CD8-positive, alpha-beta T cell (primary cell): ENCODE measurements at regions of chr16 and their contacts with region 1.

Region 1: DNA sequence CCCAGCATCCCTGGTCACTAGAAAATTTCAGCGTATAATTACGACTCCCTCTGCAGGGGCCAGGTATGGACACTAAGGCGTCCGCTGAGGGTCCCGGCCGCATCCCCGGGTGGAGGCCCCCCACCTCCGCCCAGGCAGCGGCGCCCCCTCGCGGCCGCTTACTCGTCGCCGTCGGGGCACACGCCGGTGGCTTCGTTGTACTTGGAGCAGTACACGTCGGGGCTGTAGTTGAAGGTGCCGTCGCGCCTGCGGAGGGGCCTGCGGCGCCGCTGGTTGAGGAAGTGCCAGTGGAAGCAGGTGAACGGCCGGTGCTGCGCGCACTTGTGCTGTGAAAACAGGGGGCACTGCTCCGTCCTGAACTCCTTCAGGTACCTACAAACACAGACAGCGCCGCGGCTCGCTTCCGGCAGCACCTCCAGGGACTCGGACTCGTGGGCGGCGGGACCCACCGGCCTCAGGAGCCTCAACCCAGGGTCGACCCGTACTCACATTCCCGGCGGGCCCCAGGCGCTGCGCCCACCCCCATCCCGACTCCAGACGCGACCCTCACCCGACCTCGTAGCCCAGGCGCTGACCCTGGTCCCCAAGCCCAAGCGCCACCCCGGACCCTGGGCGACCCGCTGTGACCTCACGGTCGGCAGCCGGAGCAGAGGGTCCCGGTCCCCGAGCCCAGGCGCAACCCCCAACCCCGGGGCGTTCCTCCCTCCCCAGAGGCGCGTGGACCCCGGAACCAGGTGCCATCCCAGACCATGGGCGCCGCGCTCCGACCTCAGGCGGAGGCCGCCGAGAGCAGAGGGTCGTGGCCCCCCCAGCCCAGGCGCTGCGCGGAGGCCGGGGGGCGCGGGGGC is 596 bp downstream of the UNKL start:
- DNase-seq: peak; percentile 44 to 82 (median 69)
- ATAC-seq: peak; percentile 55
- H3K4me3 ChIP-seq: peak overlapping the region; percentile 64 to 85
- H3K4me3 Mint-ChIP-seq: peak overlapping the region; percentile 85
- H3K27ac ChIP-seq: peak overlapping the region; percentile 69 to 73
- H3K27ac Mint-ChIP-seq: peak overlapping the region; percentile 89
- H3K4me1 ChIP-seq: peaks cover 17% of the 10 kb centered on the region
- H3K4me1 Mint-ChIP-seq: peaks cover 37% of the 10 kb centered on the region
- H3K27me3 ChIP-seq: no peaks in the 10 kb centered on the region
- H3K27me3 Mint-ChIP-seq: no peaks in the 10 kb centered on the region
- CTCF ChIP-seq: peak; percentile 62

Region 2: GRCh38 chr16:1152651-1153259 is 261.2 kb before region 1 on chr16 and contains the start of gene CACNA1H:
- CTCF ChIA-PET with region 1: no interaction called
- POLR2A ChIA-PET with region 1: no interaction called
- intact Hi-C with region 1: loop called in 1 of 2 experiments (anchors 10 kb)
- DNase-seq: peak; percentile 27 to 74 (median 67)
- ATAC-seq: peak; percentile 77
- H3K4me3 ChIP-seq: peak within 1 kb of the TSS; percentile 29 to 37
- H3K4me3 Mint-ChIP-seq: peak within 1 kb of the TSS; percentile 72
- H3K27ac ChIP-seq: no peak within 1 kb of the TSS
- H3K27ac Mint-ChIP-seq: no peak within 1 kb of the TSS
- H3K4me1 ChIP-seq: peaks cover 11% of the 10 kb centered on the region
- H3K4me1 Mint-ChIP-seq: peaks cover 2% of the 10 kb centered on the region
- H3K27me3 ChIP-seq: peaks cover 12 to 22% of the 10 kb centered on the region in 2 experiments
- H3K27me3 Mint-ChIP-seq: peaks cover 10% of the 10 kb centered on the region
- CTCF ChIP-seq: peak; percentile 44
- total RNA-seq, gene CACNA1H: 1.5 to 1.9 TPM

Region 3: GRCh38 chr16:1308977-1309885 is 104.7 kb before region 1 on chr16 and contains the start of gene UBE2I:
- CTCF ChIA-PET with region 1: no interaction called
- POLR2A ChIA-PET with region 1: no interaction called
- intact Hi-C with region 1: no loop called
- DNase-seq: peak; percentile 96 to 99 (median 98)
- ATAC-seq: peak; percentile 73
- H3K4me3 ChIP-seq: peak within 1 kb of the TSS; percentile 82 to 95
- H3K4me3 Mint-ChIP-seq: peak within 1 kb of the TSS; percentile 92
- H3K27ac ChIP-seq: peak within 1 kb of the TSS; percentile 100
- H3K27ac Mint-ChIP-seq: peak within 1 kb of the TSS; percentile 100
- H3K4me1 ChIP-seq: peaks cover 50% of the 10 kb centered on the region
- H3K4me1 Mint-ChIP-seq: peaks cover 41% of the 10 kb centered on the region
- H3K27me3 ChIP-seq: no peaks in the 10 kb centered on the region
- H3K27me3 Mint-ChIP-seq: no peaks in the 10 kb centered on the region
- CTCF ChIP-seq: no peak
- total RNA-seq, gene UBE2I: 285 to 294 TPM

Region 4: DNA sequence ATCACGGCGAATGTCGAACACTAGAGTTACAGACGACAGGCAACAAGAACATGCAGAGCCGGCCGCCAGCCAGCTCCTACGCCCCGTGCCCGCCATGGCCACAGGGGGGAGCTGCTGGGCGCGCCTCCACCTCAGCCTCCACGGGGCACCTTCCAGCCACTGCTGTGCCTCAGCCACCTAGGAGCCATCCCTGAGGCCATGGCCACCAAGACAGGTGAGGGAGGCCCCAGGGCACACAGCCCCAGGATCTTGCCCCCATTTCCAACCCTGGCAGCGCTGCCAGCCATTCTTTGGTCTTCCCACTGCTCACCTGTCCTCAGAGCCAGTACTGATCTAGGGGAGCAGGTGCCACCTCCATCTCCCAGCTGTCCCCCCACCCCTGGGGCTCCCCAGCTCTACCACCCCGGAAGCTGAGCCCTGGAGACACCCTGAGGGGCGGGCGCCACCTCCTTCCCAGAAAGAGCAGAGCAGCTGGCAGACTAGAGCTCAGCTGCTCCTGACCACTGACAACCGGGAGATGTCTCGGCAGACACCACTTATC is 50.3 kb before region 1 on chr16:
- CTCF ChIA-PET with region 1: interaction called, 4 read pairs
- POLR2A ChIA-PET with region 1: interaction called, 3 read pairs
- intact Hi-C with region 1: loop called in 1 of 2 experiments (anchors 1 kb)
- DNase-seq: peak; percentile 49 to 82 (median 71)
- ATAC-seq: peak; percentile 98
- H3K4me3 ChIP-seq: no peak overlapping the region
- H3K4me3 Mint-ChIP-seq: no peak overlapping the region
- H3K27ac ChIP-seq: no peak overlapping the region
- H3K27ac Mint-ChIP-seq: peak overlapping the region; percentile 37
- H3K4me1 ChIP-seq: no peaks in the 10 kb centered on the region
- H3K4me1 Mint-ChIP-seq: peaks cover 3% of the 10 kb centered on the region
- H3K27me3 ChIP-seq: no peaks in the 10 kb centered on the region
- H3K27me3 Mint-ChIP-seq: no peaks in the 10 kb centered on the region
- CTCF ChIP-seq: peak; percentile 87

Region 5: GRCh38 chr16:1378804-1379303 is 35.1 kb before region 1 on chr16:
- CTCF ChIA-PET with region 1: no interaction called
- POLR2A ChIA-PET with region 1: no interaction called
- intact Hi-C with region 1: loop called in 1 of 2 experiments (anchors 5 kb)
- DNase-seq: peak in 6 of 9 experiments; percentile 19 to 85 (median 56)
- ATAC-seq: peak; percentile 59
- H3K4me3 ChIP-seq: no peak overlapping the region
- H3K4me3 Mint-ChIP-seq: peak overlapping the region; percentile 58
- H3K27ac ChIP-seq: no peak overlapping the region
- H3K27ac Mint-ChIP-seq: peak overlapping the region; percentile 64
- H3K4me1 ChIP-seq: peaks cover 17% of the 10 kb centered on the region
- H3K4me1 Mint-ChIP-seq: peaks cover 14% of the 10 kb centered on the region
- H3K27me3 ChIP-seq: no peaks in the 10 kb centered on the region
- H3K27me3 Mint-ChIP-seq: no peaks in the 10 kb centered on the region
- CTCF ChIP-seq: no peak

Region 6: DNA sequence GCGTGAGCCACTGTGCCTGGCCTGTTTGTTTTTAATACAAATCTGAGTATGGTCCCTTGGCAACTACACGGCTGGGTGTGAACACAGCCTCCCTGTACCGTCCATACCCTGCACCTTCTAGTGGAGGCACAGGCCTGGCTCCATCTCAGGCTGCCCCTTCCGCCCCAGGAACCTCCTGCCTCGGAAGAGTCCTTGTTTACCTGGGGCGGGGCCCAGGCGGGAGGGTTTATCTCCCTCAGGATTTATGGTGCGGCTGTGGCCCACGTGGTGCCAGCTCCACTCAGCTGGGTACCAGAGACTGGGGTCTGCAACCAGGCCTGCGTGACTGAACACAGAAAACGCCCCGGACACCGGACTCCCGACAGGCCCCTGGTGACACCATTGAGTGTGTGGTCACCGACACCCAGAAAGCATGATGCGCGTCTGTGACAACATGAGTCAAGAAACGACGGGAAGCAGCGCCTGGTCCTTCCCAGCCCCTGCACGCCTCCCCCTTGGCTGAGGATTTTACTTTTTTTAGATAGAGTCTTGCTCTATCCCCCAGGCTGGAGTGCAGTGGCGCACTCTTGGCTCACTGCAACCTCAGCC is 18.4 kb before region 1 on chr16:
- CTCF ChIA-PET with region 1: no interaction called
- POLR2A ChIA-PET with region 1: no interaction called
- intact Hi-C with region 1: no loop called
- DNase-seq: no peak
- ATAC-seq: no peak
- H3K4me3 ChIP-seq: no peak overlapping the region
- H3K4me3 Mint-ChIP-seq: no peak overlapping the region
- H3K27ac ChIP-seq: no peak overlapping the region
- H3K27ac Mint-ChIP-seq: no peak overlapping the region
- H3K4me1 ChIP-seq: no peaks in the 10 kb centered on the region
- H3K4me1 Mint-ChIP-seq: no peaks in the 10 kb centered on the region
- H3K27me3 ChIP-seq: no peaks in the 10 kb centered on the region
- H3K27me3 Mint-ChIP-seq: no peaks in the 10 kb centered on the region
- CTCF ChIP-seq: no peak

Region 7: GRCh38 chr16:1455190-1456171 is 41.6 kb after region 1 on chr16:
- CTCF ChIA-PET with region 1: no interaction called
- POLR2A ChIA-PET with region 1: no interaction called
- intact Hi-C with region 1: no loop called
- DNase-seq: peak in 1 of 9 experiments; percentile 7
- ATAC-seq: no peak
- H3K4me3 ChIP-seq: no peak overlapping the region
- H3K4me3 Mint-ChIP-seq: no peak overlapping the region
- H3K27ac ChIP-seq: no peak overlapping the region
- H3K27ac Mint-ChIP-seq: no peak overlapping the region
- H3K4me1 ChIP-seq: no peaks in the 10 kb centered on the region
- H3K4me1 Mint-ChIP-seq: no peaks in the 10 kb centered on the region
- H3K27me3 ChIP-seq: no peaks in the 10 kb centered on the region
- H3K27me3 Mint-ChIP-seq: no peaks in the 10 kb centered on the region
- CTCF ChIP-seq: no peak

Region 8: GRCh38 chr16:1826691-1827575 is 413.0 kb after region 1 on chr16 and contains the starts of genes FAHD1 and HAGH:
- CTCF ChIA-PET with region 1: no interaction called
- POLR2A ChIA-PET with region 1: interaction called, 3 read pairs
- intact Hi-C with region 1: loop called in 1 of 2 experiments (anchors 5 kb)
- DNase-seq: peak; percentile 83 to 96 (median 89)
- ATAC-seq: peak; percentile 79
- H3K4me3 ChIP-seq: peak within 1 kb of the TSS; percentile 72 to 91
- H3K4me3 Mint-ChIP-seq: peak within 1 kb of the TSS; percentile 90
- H3K27ac ChIP-seq: peak within 1 kb of the TSS; percentile 73 to 78
- H3K27ac Mint-ChIP-seq: peak within 1 kb of the TSS; percentile 95
- H3K4me1 ChIP-seq: peaks cover 46% of the 10 kb centered on the region
- H3K4me1 Mint-ChIP-seq: peaks cover 48% of the 10 kb centered on the region
- H3K27me3 ChIP-seq: no peaks in the 10 kb centered on the region
- H3K27me3 Mint-ChIP-seq: no peaks in the 10 kb centered on the region
- CTCF ChIP-seq: no peak
- total RNA-seq, gene FAHD1: 11.7 to 13.7 TPM
- total RNA-seq, gene HAGH: 32.5 to 41.1 TPM

Region 9: GRCh38 chr16:1942810-1943726 is 529.2 kb after region 1 on chr16 and contains the start of gene MSRB1:
- CTCF ChIA-PET with region 1: no interaction called
- POLR2A ChIA-PET with region 1: no interaction called
- intact Hi-C with region 1: loop called in 1 of 2 experiments (anchors 10 kb)
- DNase-seq: peak; percentile 96 to 100 (median 99)
- ATAC-seq: peak; percentile 99
- H3K4me3 ChIP-seq: peak within 1 kb of the TSS; percentile 83 to 94
- H3K4me3 Mint-ChIP-seq: peak within 1 kb of the TSS; percentile 85
- H3K27ac ChIP-seq: peak within 1 kb of the TSS in 1 of 2 experiments; percentile 62
- H3K27ac Mint-ChIP-seq: peak within 1 kb of the TSS; percentile 55
- H3K4me1 ChIP-seq: peaks cover 13% of the 10 kb centered on the region
- H3K4me1 Mint-ChIP-seq: peaks cover 11% of the 10 kb centered on the region
- H3K27me3 ChIP-seq: no peaks in the 10 kb centered on the region
- H3K27me3 Mint-ChIP-seq: no peaks in the 10 kb centered on the region
- CTCF ChIP-seq: no peak
- total RNA-seq, gene MSRB1: 1.9 to 3.0 TPM

Region 10: GRCh38 chr16:1964506-1965395 is 550.8 kb after region 1 on chr16 and contains the start of gene RPS2:
- CTCF ChIA-PET with region 1: no interaction called
- POLR2A ChIA-PET with region 1: no interaction called
- intact Hi-C with region 1: loop called in 1 of 2 experiments (anchors 10 kb)
- DNase-seq: peak; percentile 92 to 99 (median 98)
- ATAC-seq: peak; percentile 89
- H3K4me3 ChIP-seq: peak within 1 kb of the TSS; percentile 82 to 99
- H3K4me3 Mint-ChIP-seq: peak within 1 kb of the TSS; percentile 94
- H3K27ac ChIP-seq: peak within 1 kb of the TSS; percentile 98 to 99
- H3K27ac Mint-ChIP-seq: peak within 1 kb of the TSS; percentile 96
- H3K4me1 ChIP-seq: peaks cover 41% of the 10 kb centered on the region
- H3K4me1 Mint-ChIP-seq: peaks cover 45% of the 10 kb centered on the region
- H3K27me3 ChIP-seq: no peaks in the 10 kb centered on the region
- H3K27me3 Mint-ChIP-seq: no peaks in the 10 kb centered on the region
- CTCF ChIP-seq: no peak
- total RNA-seq, gene RPS2: 4,060 to 4,094 TPM